Right ventricle myocardium inferior (tissue), 1 donor: ENCODE measurements at regions of chr6 and their contacts with region 1.

Region 1: GRCh38 chr6:34986845-34987246 is 97.8 kb downstream of the ANKS1A start:
- DNase-seq: no peak
- ATAC-seq: peak; percentile 79

Region 2: GRCh38 chr6:34392497-34393190 is 594.2 kb before region 1 on chr6 and contains the start of gene NUDT3:
- intact Hi-C with region 1: no loop called
- DNase-seq: peak; percentile 97
- ATAC-seq: peak; percentile 94
- total RNA-seq, gene NUDT3: 47.6 TPM

Region 3: DNA sequence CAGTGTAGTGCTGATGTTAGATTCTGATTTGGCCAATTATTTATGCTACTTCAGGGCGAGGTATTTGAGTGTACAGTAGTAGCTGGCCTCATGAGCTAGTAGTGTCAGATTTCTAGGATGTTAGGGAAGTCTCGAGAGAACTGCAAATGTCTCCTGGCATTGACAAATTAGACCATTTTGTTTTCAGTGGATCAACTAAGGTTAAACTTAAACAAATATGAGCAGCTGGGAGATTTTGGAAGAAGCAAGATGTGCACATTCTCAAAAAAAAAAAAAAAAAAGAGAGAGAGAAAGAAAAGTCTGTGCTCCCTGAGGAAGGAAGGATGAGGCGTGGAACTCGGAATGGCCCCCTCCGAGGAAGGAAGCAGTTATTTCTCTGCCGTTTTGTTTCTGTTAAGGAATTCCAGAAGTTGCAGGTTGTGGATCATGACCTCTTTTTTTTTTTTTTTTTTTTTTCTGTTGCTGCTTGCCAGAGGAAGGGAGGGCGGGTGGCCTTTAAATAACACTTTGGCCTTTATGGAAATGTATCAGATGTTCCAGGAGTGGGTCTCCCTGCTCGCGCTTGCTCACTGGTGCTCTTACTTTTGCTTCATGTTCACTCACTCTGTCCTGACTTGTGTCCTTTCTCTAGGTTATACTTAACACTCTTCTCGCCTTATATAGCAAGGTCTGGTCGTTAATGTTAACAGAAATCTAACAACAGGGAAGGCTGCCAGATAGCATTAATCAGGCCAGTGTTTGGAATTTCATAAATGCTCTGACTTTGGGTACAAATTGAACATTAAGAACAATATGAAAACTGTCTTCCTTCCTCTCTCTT is 29.9 kb after region 1 on chr6:
- intact Hi-C with region 1: loop called (anchors 2 kb)
- DNase-seq: no peak
- ATAC-seq: peak; percentile 62

Region 4: DNA sequence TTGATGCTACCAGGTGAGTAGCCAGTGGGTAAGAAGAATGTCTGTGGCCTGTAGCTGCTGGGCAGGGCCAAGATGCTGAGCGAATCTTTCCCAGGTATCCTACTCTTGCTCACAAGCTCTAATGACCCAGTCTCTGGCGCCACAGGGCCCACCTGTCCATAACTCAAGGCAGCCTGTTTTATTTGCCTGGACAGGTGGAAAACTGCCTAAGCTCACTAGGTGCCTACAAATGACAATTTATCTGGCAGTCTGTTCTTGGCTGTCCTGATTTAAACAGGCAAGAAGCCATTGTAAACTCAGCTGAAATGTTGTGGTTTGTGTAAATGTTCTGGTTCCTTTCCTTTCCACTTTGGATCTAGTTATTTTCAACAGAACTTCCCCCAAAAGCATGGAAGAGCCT is 41.0 kb after region 1 on chr6:
- intact Hi-C with region 1: no loop called
- DNase-seq: no peak
- ATAC-seq: no peak

Region 5: DNA sequence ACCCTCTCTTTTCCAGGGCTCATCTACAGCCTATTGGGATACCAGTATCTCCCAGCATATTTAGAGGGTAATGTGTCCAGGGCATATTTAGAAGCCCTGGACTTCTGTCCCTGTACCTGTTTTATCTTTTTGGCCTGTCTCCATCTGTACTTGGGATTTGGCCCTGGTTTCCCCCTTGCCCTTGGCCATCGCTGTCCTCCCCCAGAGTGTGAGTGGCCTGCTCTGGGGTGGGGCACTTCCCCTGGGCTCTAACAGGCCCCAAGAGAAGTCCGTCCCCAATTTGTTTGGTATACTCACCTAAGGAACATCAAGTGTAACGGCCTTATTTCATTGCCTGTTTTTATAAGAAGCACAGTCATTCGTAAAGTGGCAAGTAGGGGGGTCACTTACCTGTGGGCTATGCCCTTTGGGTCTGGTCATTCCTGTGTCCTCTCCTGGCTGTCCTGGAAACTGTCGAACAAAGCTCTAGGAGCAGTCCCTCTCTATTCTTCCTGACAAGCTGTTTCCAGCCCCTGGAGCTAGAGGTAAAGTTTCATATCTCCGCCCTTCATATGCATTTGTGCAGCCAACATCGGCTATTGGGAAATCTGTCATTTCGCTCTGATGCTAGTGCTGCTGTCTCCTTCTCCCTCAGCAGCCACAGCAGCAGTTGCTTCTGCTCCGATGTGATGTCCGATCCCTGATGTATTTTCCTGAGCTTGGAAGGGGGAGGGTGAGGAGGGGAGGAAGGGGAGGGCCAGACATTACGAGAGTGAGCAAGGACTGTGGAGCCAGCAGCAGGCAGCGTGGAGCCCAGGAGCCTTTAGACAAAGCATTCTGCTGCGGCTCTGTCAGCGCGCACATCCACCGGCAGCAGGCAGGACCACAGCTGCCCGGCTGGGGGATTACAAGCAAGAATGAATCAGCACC is 70.9 kb after region 1 on chr6:
- intact Hi-C with region 1: loop called (anchors 5 kb)
- DNase-seq: no peak
- ATAC-seq: peak; percentile 47

Region 6: GRCh38 chr6:35071347-35071994 is 84.6 kb after region 1 on chr6:
- intact Hi-C with region 1: no loop called
- DNase-seq: no peak
- ATAC-seq: no peak

Region 7: GRCh38 chr6:35139908-35140655 is 153.2 kb after region 1 on chr6:
- intact Hi-C with region 1: loop called (anchors 1 kb)
- DNase-seq: no peak
- ATAC-seq: peak; percentile 68

Region 8: GRCh38 chr6:35202066-35202546 is 215.3 kb after region 1 on chr6:
- intact Hi-C with region 1: loop called (anchors 5 kb)
- DNase-seq: no peak
- ATAC-seq: peak; percentile 73

Region 9: DNA sequence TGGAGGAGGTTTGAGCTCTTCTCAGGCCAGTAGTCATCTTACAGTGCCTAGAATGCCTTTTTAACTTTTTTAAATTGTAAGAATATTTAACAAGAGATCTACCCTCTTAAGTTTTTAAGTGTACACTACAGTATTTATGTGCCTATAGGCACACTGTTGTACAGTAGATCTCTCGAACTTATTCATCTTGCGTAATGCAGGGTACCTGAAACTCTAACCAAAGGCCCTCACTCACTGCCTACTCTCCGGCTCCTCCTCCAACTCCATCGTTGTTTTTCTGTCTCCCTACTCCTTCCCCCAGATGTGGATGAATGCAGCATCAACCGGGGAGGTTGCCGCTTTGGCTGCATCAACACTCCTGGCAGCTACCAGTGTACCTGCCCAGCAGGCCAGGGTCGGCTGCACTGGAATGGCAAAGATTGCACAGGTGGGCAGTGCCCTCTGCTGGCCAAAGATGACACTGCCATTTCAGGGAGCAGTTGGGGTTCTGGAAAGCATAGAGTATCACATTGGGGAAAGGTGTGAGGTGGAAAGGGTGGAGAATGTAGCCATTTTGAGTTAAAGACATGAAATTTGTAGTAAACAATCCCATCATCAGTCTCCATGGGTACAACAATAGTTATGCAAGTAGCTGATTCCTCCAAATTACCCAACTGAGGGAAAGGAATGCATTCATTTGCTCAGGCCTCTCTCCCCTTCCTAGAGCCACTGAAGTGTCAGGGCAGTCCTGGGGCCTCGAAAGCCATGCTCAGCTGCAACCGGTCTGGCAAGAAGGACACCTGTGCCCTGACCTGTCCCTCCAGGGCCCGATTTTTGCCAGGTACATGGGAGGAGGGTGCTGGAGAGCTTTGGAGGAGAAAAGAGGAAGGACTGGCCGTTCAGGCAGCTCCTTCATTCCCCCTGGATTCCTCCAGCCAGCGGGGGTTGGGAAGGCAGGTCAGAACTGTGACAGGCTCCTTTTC is 254.3 kb after region 1 on chr6:
- intact Hi-C with region 1: loop called (anchors 10 kb)
- DNase-seq: no peak
- ATAC-seq: peak; percentile 26

Region 10: GRCh38 chr6:35262596-35262995 is 275.8 kb after region 1 on chr6:
- intact Hi-C with region 1: no loop called
- DNase-seq: no peak
- ATAC-seq: no peak